Activated CD4-positive, alpha-beta memory T cell treated with anti-CD3 and anti-CD28 coated beads, Interleukin-2, amount 10 ng/mL, durations not matched to agents 7 days and 5 days (primary cell): ENCODE measurements at regions of chr7 and their contacts with region 1.

Region 1: GRCh38 chr7:144835652-144836544 is at the start of gene TPK1:
- DNase-seq: peak; percentile 94
- H3K4me3 Mint-ChIP-seq: peak within 1 kb of the TSS; percentile 84
- H3K27ac Mint-ChIP-seq: peak within 1 kb of the TSS; percentile 99
- H3K4me1 Mint-ChIP-seq: peaks cover 50% of the 10 kb centered on the region
- H3K27me3 Mint-ChIP-seq: no peaks in the 10 kb centered on the region
- total RNA-seq, gene TPK1: 16.7 to 18.5 TPM

Region 2: DNA sequence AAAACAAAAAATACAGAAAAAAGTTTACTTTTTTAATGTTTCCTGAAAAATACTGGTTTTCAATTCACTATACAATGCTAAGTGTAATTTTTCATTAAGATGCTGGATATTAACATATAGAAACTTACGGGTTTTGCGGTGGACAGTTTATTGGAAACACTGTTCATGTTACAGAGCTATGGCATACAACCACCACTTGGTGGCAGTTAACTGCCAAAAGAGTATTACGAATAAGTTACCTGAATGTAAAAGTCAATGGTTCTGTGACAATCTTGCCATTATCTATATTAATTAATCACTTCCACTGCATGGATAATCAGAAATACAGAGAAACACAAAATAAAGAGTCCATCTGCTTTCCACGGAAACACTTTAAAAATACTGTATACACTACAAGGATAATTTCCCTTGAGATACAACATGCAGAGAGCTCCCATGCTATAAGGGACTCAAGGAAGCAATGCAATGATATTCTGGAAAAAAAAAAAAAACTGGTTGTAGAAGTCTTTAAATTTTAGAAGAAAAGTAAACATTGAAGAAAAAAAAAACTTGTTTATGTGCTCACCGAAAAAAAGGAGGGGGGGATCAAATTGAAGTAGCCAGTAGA is 97.1 kb before region 1 on chr7:
- CTCF ChIA-PET with region 1: interaction called, 12 read pairs
- POLR2A ChIA-PET with region 1: interaction called, 11 read pairs
- DNase-seq: no peak
- H3K4me3 Mint-ChIP-seq: no peak overlapping the region
- H3K27ac Mint-ChIP-seq: no peak overlapping the region
- H3K4me1 Mint-ChIP-seq: peaks cover 2% of the 10 kb centered on the region
- H3K27me3 Mint-ChIP-seq: no peaks in the 10 kb centered on the region

Region 3: GRCh38 chr7:144777005-144777751 is 58.7 kb before region 1 on chr7:
- CTCF ChIA-PET with region 1: no interaction called
- POLR2A ChIA-PET with region 1: no interaction called
- DNase-seq: no peak
- H3K4me3 Mint-ChIP-seq: no peak overlapping the region
- H3K27ac Mint-ChIP-seq: no peak overlapping the region
- H3K4me1 Mint-ChIP-seq: peaks cover 4% of the 10 kb centered on the region
- H3K27me3 Mint-ChIP-seq: no peaks in the 10 kb centered on the region

Region 4: GRCh38 chr7:144812379-144813283 is 23.3 kb before region 1 on chr7:
- CTCF ChIA-PET with region 1: interaction called, 24 read pairs
- POLR2A ChIA-PET with region 1: interaction called, 146 read pairs
- DNase-seq: peak; percentile 58
- H3K4me3 Mint-ChIP-seq: peak overlapping the region; percentile 59
- H3K27ac Mint-ChIP-seq: peak overlapping the region; percentile 70
- H3K4me1 Mint-ChIP-seq: peaks cover 32% of the 10 kb centered on the region
- H3K27me3 Mint-ChIP-seq: no peaks in the 10 kb centered on the region

Region 5: GRCh38 chr7:144818511-144818910 is 17.4 kb before region 1 on chr7:
- CTCF ChIA-PET with region 1: interaction called, 24 read pairs
- POLR2A ChIA-PET with region 1: interaction called, 146 read pairs
- DNase-seq: peak; percentile 55
- H3K4me3 Mint-ChIP-seq: no peak overlapping the region
- H3K27ac Mint-ChIP-seq: peak overlapping the region; percentile 63
- H3K4me1 Mint-ChIP-seq: peaks cover 63% of the 10 kb centered on the region
- H3K27me3 Mint-ChIP-seq: no peaks in the 10 kb centered on the region

Region 6: GRCh38 chr7:144854839-144855424 is 19.0 kb after region 1 on chr7:
- CTCF ChIA-PET with region 1: interaction called, 3 read pairs
- POLR2A ChIA-PET with region 1: interaction called, 12 read pairs
- DNase-seq: no peak
- H3K4me3 Mint-ChIP-seq: no peak overlapping the region
- H3K27ac Mint-ChIP-seq: no peak overlapping the region
- H3K4me1 Mint-ChIP-seq: no peaks in the 10 kb centered on the region
- H3K27me3 Mint-ChIP-seq: peaks cover 2% of the 10 kb centered on the region